ENCODE measurements at regions of chr11 and their contacts with region 1.

Region 1: GRCh38 chr11:67507864-67508485 is at the start of gene CDK2AP2:
- DNase-seq: peak; percentile 99
- H3K4me3 ChIP-seq: peak within 1 kb of the TSS; percentile 49 to 83 (median 69)
- H3K4me3 Mint-ChIP-seq: peak within 1 kb of the TSS; percentile 78 to 87
- H3K27ac ChIP-seq: peak within 1 kb of the TSS; percentile 82 to 93
- H3K27ac Mint-ChIP-seq: peak within 1 kb of the TSS; percentile 88 to 98 (median 95)
- H3K4me1 ChIP-seq: peaks cover 46 to 53% of the 10 kb centered on the region in 2 donors
- H3K4me1 Mint-ChIP-seq: peaks cover 30% of the 10 kb centered on the region
- H3K27me3 ChIP-seq: peaks cover 0 to 13% of the 10 kb centered on the region in 2 donors
- H3K27me3 Mint-ChIP-seq: peaks cover 5 to 17% (median 11%) of the 10 kb centered on the region in 3 donors
- CTCF ChIP-seq: no peak
- polyA plus RNA-seq, gene CDK2AP2: 47.8 to 80.2 (median 78.5) TPM

Region 2: DNA sequence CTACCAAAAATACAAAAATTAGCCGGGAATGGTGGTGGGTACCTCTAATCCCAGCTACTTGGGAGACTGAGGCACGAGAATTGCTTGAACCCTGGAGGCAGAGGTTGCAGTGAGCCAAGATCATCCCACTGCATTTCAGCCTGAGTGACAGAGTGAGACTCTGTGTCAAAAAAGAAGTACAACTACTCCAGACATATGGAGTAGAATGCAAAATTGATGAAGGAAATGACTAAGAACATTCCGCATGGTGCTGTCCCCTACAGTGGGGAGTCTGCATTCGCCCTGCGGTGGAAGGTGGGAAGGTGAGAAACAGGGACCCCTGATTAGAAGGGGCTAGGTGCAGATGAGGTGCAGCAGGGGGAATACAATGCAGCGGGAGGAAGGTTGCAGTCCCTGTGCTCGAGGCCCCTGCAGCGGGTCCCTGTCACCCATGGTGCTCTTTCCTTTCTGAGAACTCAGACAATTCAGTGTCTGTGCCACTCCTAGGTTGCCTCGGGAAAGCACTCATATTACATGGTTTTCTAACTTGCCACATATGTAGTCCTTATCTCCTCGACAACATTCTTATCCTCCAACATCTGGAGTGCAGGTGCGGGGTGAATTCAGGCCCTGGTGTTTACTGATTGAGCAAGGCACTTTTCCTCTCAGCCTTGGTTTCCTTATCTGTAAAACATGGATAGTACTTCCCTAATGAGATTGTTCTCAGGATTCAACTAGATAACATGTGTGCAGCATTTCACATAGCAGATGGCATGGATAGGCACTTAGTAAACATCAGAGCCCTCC is 159.8 kb before region 1 on chr11:
- intact Hi-C with region 1: loop called (anchors 2 to 5 kb)
- DNase-seq: no peak
- H3K4me3 ChIP-seq: no peak overlapping the region
- H3K4me3 Mint-ChIP-seq: no peak overlapping the region
- H3K27ac ChIP-seq: no peak overlapping the region
- H3K27ac Mint-ChIP-seq: no peak overlapping the region
- H3K4me1 ChIP-seq: peaks cover 23 to 24% of the 10 kb centered on the region in 2 donors
- H3K4me1 Mint-ChIP-seq: peaks cover 32% of the 10 kb centered on the region
- H3K27me3 ChIP-seq: no peaks in the 10 kb centered on the region
- H3K27me3 Mint-ChIP-seq: peaks cover 0 to 2% (median 0%) of the 10 kb centered on the region in 3 donors
- CTCF ChIP-seq: no peak

Region 3: GRCh38 chr11:67401495-67402191 is 106.3 kb before region 1 on chr11 and contains the start of gene PPP1CA:
- intact Hi-C with region 1: loop called (anchors 1 to 2 kb)
- DNase-seq: peak; percentile 80 to 90 (median 86)
- H3K4me3 ChIP-seq: peak within 1 kb of the TSS; percentile 70 to 82 (median 79)
- H3K4me3 Mint-ChIP-seq: peak within 1 kb of the TSS; percentile 78 to 87
- H3K27ac ChIP-seq: peak within 1 kb of the TSS; percentile 65 to 83
- H3K27ac Mint-ChIP-seq: peak within 1 kb of the TSS; percentile 73 to 92 (median 90)
- H3K4me1 ChIP-seq: peaks cover 69 to 90% of the 10 kb centered on the region in 2 donors
- H3K4me1 Mint-ChIP-seq: peaks cover 78% of the 10 kb centered on the region
- H3K27me3 ChIP-seq: no peaks in the 10 kb centered on the region
- H3K27me3 Mint-ChIP-seq: no peaks in the 10 kb centered on the region
- CTCF ChIP-seq: peak; percentile 69
- polyA plus RNA-seq, gene PPP1CA: 209 to 551 (median 461) TPM

Region 4: GRCh38 chr11:67468835-67469811 is 38.9 kb before region 1 on chr11 and contains the start of gene TMEM134:
- intact Hi-C with region 1: loop called (anchors 1 to 5 kb)
- DNase-seq: peak; percentile 89 to 90 (median 90)
- H3K4me3 ChIP-seq: peak within 1 kb of the TSS; percentile 63 to 88 (median 66)
- H3K4me3 Mint-ChIP-seq: peak within 1 kb of the TSS; percentile 79 to 92
- H3K27ac ChIP-seq: peak within 1 kb of the TSS; percentile 41 to 90
- H3K27ac Mint-ChIP-seq: peak within 1 kb of the TSS in 5 of 7 donors; percentile 75 to 85 (median 79)
- H3K4me1 ChIP-seq: peaks cover 24 to 42% of the 10 kb centered on the region in 2 donors
- H3K4me1 Mint-ChIP-seq: peaks cover 27% of the 10 kb centered on the region
- H3K27me3 ChIP-seq: no peaks in the 10 kb centered on the region
- H3K27me3 Mint-ChIP-seq: peaks cover 0 to 12% (median 5%) of the 10 kb centered on the region in 3 donors
- CTCF ChIP-seq: peak; percentile 59
- polyA plus RNA-seq, gene TMEM134: 67.4 to 104 (median 76.8) TPM